Naive thymus-derived CD4-positive, alpha-beta T cell (primary cell): ENCODE measurements at regions of chr9 and their contacts with region 1.

Region 1: DNA sequence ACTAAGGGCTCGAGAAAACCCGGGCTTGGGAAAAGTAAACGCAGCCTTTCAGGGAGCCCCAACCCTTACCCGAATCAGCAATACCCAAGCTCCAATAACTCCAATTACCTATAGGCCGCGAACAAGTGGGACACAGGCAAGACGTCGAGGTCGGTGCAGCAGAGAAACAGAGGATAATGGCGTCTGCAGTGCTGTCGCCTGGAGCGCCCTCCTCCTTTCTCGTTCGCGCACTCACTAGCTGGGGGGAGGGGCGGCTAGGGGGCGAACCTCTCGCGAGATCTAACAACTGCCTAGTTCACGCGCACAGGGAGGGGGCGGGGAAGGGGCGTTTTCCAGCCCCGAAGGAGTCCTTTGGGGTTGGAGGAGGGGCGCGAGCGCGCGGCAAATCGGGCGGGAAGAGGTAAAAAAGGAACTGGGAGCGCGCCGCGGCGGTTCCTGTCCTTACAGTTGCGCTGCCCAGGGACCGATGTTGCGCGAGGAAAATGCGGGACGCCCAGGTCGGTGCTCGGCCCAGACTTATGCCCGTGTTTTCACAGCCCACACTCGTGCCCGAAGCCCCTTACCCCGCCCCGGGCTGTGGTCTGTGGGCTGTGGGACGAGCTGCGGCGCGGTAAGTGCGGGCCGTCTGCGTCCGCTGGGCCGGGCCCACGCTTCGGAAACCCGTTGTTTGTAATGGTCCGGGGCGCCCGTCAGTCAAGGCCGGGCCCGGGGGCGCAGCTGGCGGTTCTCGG is at the start of gene RMI1:
- DNase-seq: peak; percentile 95 to 99 (median 98)
- ATAC-seq: peak; percentile 88
- H3K4me3 ChIP-seq: peak within 1 kb of the TSS; percentile 93
- H3K4me3 Mint-ChIP-seq: peak within 1 kb of the TSS; percentile 91 to 100 (median 99)
- H3K27ac ChIP-seq: peak within 1 kb of the TSS; percentile 99
- H3K27ac Mint-ChIP-seq: peak within 1 kb of the TSS; percentile 97 to 100 (median 99)
- H3K4me1 ChIP-seq: peaks cover 21 to 27% of the 10 kb centered on the region in 2 donors
- H3K4me1 Mint-ChIP-seq: peaks cover 28 to 52% (median 46%) of the 10 kb centered on the region in 7 donors
- H3K27me3 ChIP-seq: no peaks in the 10 kb centered on the region
- H3K27me3 Mint-ChIP-seq: no peaks in the 10 kb centered on the region
- total RNA-seq, gene RMI1: 1.6 to 24.8 (median 5.2) TPM

Region 2: DNA sequence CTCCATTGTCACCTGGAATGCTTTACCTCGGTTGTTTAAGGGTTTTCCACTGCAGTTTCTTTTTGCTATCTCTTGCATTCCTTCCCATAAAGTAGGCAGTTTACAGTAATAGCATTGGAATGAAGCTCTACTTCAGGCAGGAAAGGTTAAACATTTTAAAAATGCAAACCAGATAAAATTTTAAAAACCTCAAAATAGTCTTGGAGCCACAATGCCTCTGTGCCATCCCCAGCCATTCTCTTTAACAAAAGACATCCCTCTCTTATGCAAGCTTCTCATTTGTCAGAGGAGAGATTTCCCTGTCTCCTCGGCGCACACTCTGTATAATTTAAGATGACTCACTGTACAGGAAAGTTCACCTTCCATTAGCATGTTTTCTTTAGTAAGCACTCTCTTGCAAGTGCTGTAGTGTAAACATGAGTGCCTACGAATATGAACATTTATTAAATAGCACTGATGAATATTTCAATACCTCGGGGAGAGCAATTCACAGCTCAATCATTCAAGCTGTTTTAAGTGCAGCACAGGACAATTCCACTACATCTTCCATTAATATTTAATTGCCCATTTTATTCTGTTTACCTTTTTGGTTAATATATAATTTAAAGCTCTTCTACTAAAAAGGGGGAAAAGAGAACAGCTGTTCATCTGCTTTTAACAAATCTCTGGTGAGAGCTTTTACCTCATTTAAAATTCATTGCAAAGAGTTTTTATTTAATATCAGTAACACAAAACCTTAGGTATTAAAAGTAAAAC is 1648.4 kb before region 1 on chr9:
- CTCF ChIA-PET with region 1: no interaction called
- POLR2A ChIA-PET with region 1: no interaction called
- intact Hi-C with region 1: no loop called
- DNase-seq: no peak
- ATAC-seq: no peak
- H3K4me3 ChIP-seq: no peak overlapping the region
- H3K4me3 Mint-ChIP-seq: no peak overlapping the region
- H3K27ac ChIP-seq: no peak overlapping the region
- H3K27ac Mint-ChIP-seq: no peak overlapping the region
- H3K4me1 ChIP-seq: no peaks in the 10 kb centered on the region
- H3K4me1 Mint-ChIP-seq: no peaks in the 10 kb centered on the region
- H3K27me3 ChIP-seq: no peaks in the 10 kb centered on the region
- H3K27me3 Mint-ChIP-seq: no peaks in the 10 kb centered on the region

Region 3: DNA sequence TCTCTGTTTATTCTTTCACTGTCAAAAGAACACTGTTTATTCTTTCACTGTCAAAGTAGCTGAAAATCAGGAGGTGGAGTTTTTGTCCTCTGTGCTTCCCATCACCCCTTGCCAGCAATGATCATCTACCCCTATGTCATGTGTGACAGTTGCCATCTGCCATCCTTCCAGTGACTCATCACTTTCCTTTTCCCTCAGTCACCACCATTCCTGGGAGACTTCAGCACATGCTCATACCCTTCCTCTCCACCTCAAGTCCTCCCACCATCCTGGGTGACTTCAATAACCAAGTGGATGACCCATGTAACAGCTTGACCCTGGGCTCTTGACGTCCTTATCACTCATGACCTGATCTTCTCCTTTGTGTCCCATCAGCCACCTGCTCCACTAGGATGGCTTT is 874.3 kb before region 1 on chr9:
- CTCF ChIA-PET with region 1: no interaction called
- POLR2A ChIA-PET with region 1: no interaction called
- intact Hi-C with region 1: no loop called
- DNase-seq: no peak
- ATAC-seq: no peak
- H3K4me3 ChIP-seq: no peak overlapping the region
- H3K4me3 Mint-ChIP-seq: no peak overlapping the region
- H3K27ac ChIP-seq: no peak overlapping the region
- H3K27ac Mint-ChIP-seq: no peak overlapping the region
- H3K4me1 ChIP-seq: no peaks in the 10 kb centered on the region
- H3K4me1 Mint-ChIP-seq: no peaks in the 10 kb centered on the region
- H3K27me3 ChIP-seq: peaks cover 0 to 3% of the 10 kb centered on the region in 2 donors
- H3K27me3 Mint-ChIP-seq: peaks cover 0 to 4% (median 0%) of the 10 kb centered on the region in 5 donors

Region 4: GRCh38 chr9:83622939-83623678 is 357.5 kb before region 1 on chr9 and contains the start of gene IDNK:
- CTCF ChIA-PET with region 1: no interaction called
- POLR2A ChIA-PET with region 1: interaction called, 10 read pairs
- intact Hi-C with region 1: loop called (anchors 1 to 2 kb)
- DNase-seq: peak; percentile 52 to 76 (median 64)
- ATAC-seq: peak; percentile 90
- H3K4me3 ChIP-seq: peak within 1 kb of the TSS; percentile 59
- H3K4me3 Mint-ChIP-seq: peak within 1 kb of the TSS; percentile 90 to 96 (median 96)
- H3K27ac ChIP-seq: peak within 1 kb of the TSS; percentile 83
- H3K27ac Mint-ChIP-seq: peak within 1 kb of the TSS; percentile 74 to 98 (median 96)
- H3K4me1 ChIP-seq: peaks cover 8 to 11% of the 10 kb centered on the region in 2 donors
- H3K4me1 Mint-ChIP-seq: peaks cover 21 to 51% (median 30%) of the 10 kb centered on the region in 7 donors
- H3K27me3 ChIP-seq: no peaks in the 10 kb centered on the region
- H3K27me3 Mint-ChIP-seq: peaks cover 0 to 14% (median 0%) of the 10 kb centered on the region in 5 donors
- total RNA-seq, gene IDNK: 8.5 to 11.3 (median 10.9) TPM

Region 5: DNA sequence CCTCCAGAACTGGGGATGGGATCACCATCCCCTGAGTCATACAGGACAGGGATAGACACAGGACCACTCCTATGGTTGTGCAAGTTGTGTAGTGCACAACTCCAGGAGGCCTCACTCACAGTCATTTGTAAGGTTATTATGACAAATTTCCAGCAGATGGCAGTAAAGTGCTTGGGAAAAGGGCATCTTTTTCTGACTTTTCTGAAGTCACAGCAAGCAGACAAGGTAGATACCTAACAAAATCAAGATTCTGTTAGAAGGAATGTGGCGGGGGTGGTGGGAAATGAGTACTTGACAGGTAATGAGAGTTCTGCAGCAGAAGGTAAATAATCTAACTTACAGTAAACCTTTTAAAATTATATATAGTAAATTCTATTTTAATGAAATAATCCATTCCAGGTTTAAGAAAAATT is 42.6 kb before region 1 on chr9:
- CTCF ChIA-PET with region 1: no interaction called
- POLR2A ChIA-PET with region 1: interaction called, 3 read pairs
- intact Hi-C with region 1: loop called in 1 of 2 experiments (anchors 1 kb)
- DNase-seq: peak in 7 of 9 donors; percentile 44 to 74 (median 66)
- ATAC-seq: peak; percentile 84
- H3K4me3 ChIP-seq: no peak overlapping the region
- H3K4me3 Mint-ChIP-seq: no peak overlapping the region
- H3K27ac ChIP-seq: no peak overlapping the region
- H3K27ac Mint-ChIP-seq: no peak overlapping the region
- H3K4me1 ChIP-seq: no peaks in the 10 kb centered on the region
- H3K4me1 Mint-ChIP-seq: peaks cover 0 to 19% (median 0%) of the 10 kb centered on the region in 7 donors
- H3K27me3 ChIP-seq: no peaks in the 10 kb centered on the region
- H3K27me3 Mint-ChIP-seq: no peaks in the 10 kb centered on the region

Region 6: DNA sequence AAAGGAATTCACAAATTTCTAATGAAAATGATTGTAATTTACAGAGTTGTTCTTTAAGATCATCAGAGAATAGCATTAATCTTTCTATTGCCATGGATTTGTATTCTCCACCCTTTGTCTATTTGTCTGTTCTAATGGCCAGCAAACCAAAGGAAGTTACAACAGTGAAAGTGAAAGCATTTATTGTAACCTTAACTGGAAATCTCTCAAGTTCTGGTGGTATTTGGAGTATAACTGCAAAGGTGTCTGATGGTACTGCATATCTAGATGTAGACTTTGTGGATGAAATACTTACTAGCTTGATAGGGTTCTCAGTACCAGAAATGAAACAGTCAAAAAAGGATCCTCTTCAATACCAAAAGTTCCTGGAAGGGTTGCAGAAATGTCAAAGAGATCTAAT is 21.8 kb after region 1 on chr9:
- CTCF ChIA-PET with region 1: interaction called, 3 read pairs
- POLR2A ChIA-PET with region 1: interaction called, 7 read pairs
- intact Hi-C with region 1: loop called in 1 of 2 experiments (anchors 1 kb)
- DNase-seq: peak in 5 of 9 donors; percentile 0 to 20 (median 10)
- ATAC-seq: peak; percentile 40
- H3K4me3 ChIP-seq: no peak overlapping the region
- H3K4me3 Mint-ChIP-seq: peak overlapping the region in 3 of 10 donors; percentile 4 to 58 (median 16)
- H3K27ac ChIP-seq: no peak overlapping the region
- H3K27ac Mint-ChIP-seq: peak overlapping the region in 5 of 9 donors; percentile 3 to 59 (median 34)
- H3K4me1 ChIP-seq: no peaks in the 10 kb centered on the region
- H3K4me1 Mint-ChIP-seq: peaks cover 9 to 27% (median 13%) of the 10 kb centered on the region in 7 donors
- H3K27me3 ChIP-seq: no peaks in the 10 kb centered on the region
- H3K27me3 Mint-ChIP-seq: no peaks in the 10 kb centered on the region

Region 7: GRCh38 chr9:84261082-84261746 is 280.7 kb after region 1 on chr9:
- CTCF ChIA-PET with region 1: no interaction called
- POLR2A ChIA-PET with region 1: interaction called, 3 read pairs
- intact Hi-C with region 1: loop called in 1 of 2 experiments (anchors 1 kb)
- DNase-seq: peak; percentile 7 to 46 (median 22)
- ATAC-seq: peak; percentile 77
- H3K4me3 ChIP-seq: no peak overlapping the region
- H3K4me3 Mint-ChIP-seq: peak overlapping the region in 5 of 10 donors; percentile 4 to 68 (median 26)
- H3K27ac ChIP-seq: no peak overlapping the region
- H3K27ac Mint-ChIP-seq: no peak overlapping the region
- H3K4me1 ChIP-seq: no peaks in the 10 kb centered on the region
- H3K4me1 Mint-ChIP-seq: peaks cover 0 to 14% (median 4%) of the 10 kb centered on the region in 7 donors
- H3K27me3 ChIP-seq: no peaks in the 10 kb centered on the region
- H3K27me3 Mint-ChIP-seq: peaks cover 0 to 17% (median 0%) of the 10 kb centered on the region in 5 donors

Region 8: DNA sequence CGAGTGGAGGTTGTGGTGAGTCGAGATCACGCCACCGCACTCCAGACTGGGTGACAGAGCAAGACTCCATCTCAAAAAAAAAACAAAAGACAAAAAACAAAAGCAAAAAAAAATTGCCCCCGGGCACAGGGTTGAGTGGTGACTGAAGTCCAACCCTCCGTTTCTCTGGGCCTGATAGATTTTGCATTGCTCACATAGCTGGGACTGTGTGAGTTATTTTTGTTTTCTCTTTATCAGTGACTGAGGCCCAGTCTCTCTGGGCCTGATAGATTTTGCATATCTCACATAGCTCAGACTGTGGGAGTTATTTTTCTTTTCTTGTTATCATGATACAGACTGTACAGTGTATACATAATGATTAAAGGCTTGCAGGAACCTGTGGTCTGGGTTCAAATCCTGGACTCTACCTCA is 362.6 kb after region 1 on chr9:
- CTCF ChIA-PET with region 1: no interaction called
- POLR2A ChIA-PET with region 1: no interaction called
- intact Hi-C with region 1: no loop called
- DNase-seq: no peak
- ATAC-seq: no peak
- H3K4me3 ChIP-seq: no peak overlapping the region
- H3K4me3 Mint-ChIP-seq: no peak overlapping the region
- H3K27ac ChIP-seq: no peak overlapping the region
- H3K27ac Mint-ChIP-seq: no peak overlapping the region
- H3K4me1 ChIP-seq: no peaks in the 10 kb centered on the region
- H3K4me1 Mint-ChIP-seq: no peaks in the 10 kb centered on the region
- H3K27me3 ChIP-seq: no peaks in the 10 kb centered on the region
- H3K27me3 Mint-ChIP-seq: peaks cover 0 to 20% (median 4%) of the 10 kb centered on the region in 5 donors

Region 9: GRCh38 chr9:85741875-85742629 is 1761.5 kb after region 1 on chr9 and contains the start of gene AGTPBP1:
- CTCF ChIA-PET with region 1: no interaction called
- POLR2A ChIA-PET with region 1: interaction called, 7 read pairs
- intact Hi-C with region 1: loop called (anchors 1 kb)
- DNase-seq: peak; percentile 95 to 99 (median 97)
- ATAC-seq: peak; percentile 93
- H3K4me3 ChIP-seq: peak within 1 kb of the TSS; percentile 88
- H3K4me3 Mint-ChIP-seq: peak within 1 kb of the TSS; percentile 90 to 99 (median 95)
- H3K27ac ChIP-seq: peak within 1 kb of the TSS; percentile 93
- H3K27ac Mint-ChIP-seq: peak within 1 kb of the TSS; percentile 91 to 99 (median 95)
- H3K4me1 ChIP-seq: peaks cover 0 to 14% of the 10 kb centered on the region in 2 donors
- H3K4me1 Mint-ChIP-seq: peaks cover 14 to 48% (median 33%) of the 10 kb centered on the region in 7 donors
- H3K27me3 ChIP-seq: no peaks in the 10 kb centered on the region
- H3K27me3 Mint-ChIP-seq: peaks cover 0 to 18% (median 0%) of the 10 kb centered on the region in 5 donors
- total RNA-seq, gene AGTPBP1: 31.9 to 85.7 (median 59.6) TPM